Aorta (tissue), 5 donors: ENCODE measurements at regions of chr7 and their contacts with region 1.

Region 1: DNA sequence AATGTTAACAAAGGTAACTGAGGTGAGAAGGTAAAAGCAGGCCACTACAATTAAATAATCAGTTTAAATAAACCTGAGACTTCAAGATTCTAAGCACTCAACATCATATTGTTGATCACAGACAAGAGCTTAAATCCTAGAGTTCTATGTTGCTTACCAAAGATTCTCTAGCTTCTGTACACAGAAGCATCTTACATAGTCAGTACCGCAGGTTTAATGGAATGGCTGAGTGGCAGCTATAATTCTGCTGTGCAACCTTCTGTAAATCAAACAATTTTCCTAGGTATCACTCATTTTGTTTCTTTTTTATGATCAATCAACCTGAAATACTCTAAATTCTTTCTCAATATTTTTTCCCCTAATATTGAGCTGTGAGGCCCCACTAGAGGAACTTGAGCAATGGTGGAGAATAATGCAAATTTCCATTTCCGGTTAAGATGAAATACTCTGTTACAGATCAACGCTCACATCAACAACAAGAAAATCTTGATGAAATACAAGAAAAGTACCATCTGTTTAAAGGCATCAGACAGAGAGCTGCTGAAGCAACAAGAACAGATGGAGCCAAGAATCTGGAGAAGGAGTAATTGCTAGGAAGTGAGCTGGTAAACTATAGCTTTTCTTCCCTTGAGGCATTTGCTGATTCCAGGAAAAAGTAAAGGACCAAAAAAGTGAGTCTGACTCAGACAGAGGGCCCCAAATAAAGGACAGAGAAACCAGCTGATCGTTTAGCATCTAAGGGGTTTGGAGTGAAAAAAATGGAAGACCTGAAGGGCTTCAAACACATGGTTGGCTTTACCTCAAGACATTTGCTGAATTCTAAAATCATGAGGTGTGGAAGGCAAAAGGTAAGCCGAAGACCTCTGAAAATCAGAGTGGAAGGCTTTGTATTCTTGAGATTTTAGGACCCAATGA is 22.6 kb downstream of the PNPLA8 start:
- DNase-seq: no peak
- ATAC-seq: no peak
- H3K4me3 ChIP-seq: no peak overlapping the region
- H3K27ac ChIP-seq: no peak overlapping the region
- H3K4me1 ChIP-seq: no peaks in the 10 kb centered on the region
- H3K27me3 ChIP-seq: no peaks in the 10 kb centered on the region

Region 2: DNA sequence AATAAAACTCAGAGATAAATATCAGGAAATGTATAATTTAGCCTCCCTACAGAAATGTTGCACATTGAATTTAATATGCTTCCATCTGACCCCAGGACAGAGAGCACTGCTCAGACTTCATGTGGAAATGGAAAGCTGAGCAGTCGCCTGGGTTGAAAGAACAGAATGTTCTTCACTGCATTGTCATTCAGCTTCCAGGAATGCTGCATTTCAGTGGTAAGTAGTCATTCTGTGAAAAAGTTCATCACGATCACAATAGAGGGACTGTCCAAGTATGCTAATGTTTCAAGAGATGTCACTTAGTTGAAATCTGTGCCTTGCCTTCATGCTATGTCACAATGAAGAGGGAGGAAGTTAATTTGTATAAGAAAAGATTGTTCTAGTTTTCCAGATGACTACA is 194.5 kb before region 1 on chr7:
- intact Hi-C with region 1: no loop called
- DNase-seq: no peak
- ATAC-seq: no peak
- H3K4me3 ChIP-seq: no peak overlapping the region
- H3K27ac ChIP-seq: no peak overlapping the region
- H3K4me1 ChIP-seq: no peaks in the 10 kb centered on the region
- H3K27me3 ChIP-seq: no peaks in the 10 kb centered on the region

Region 3: DNA sequence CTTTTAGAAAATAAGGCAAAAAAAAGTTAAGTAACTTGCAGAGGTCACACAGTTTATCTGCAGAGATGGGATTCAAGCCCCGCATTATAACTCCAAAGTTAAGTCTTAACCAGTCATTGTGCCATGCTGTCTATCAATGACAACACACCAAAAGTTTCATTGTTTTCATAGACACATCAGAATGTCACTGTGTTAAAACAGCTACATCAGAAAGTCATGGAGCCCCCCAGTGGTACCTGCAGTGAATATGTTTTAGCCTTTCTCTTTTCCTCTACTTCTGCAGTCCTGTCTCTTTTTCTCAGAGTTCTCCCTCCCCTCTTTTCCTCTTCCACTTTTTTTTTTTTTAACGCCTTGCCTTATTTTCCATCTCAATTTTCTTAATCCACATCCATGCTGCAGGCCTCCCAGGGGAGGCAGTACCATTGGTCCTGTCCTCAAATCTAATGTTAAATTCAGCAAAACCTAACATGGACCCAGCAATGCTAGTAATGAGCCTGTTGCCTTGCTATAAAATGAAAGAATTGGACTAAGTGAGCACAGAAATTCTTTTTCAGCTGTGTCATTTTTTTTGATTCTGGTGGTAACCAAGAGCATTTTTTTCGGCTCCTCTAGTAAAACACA is 43.3 kb before region 1 on chr7:
- intact Hi-C with region 1: loop called in 1 of 2 experiments (anchors 10 kb)
- DNase-seq: no peak
- ATAC-seq: no peak
- H3K4me3 ChIP-seq: no peak overlapping the region
- H3K27ac ChIP-seq: no peak overlapping the region
- H3K4me1 ChIP-seq: no peaks in the 10 kb centered on the region
- H3K27me3 ChIP-seq: no peaks in the 10 kb centered on the region